ENCODE measurements at regions of chr19 and their contacts with region 1.

Region 1: GRCh38 chr19:49817964-49818648 is at the start of gene MED25:
- DNase-seq: peak; percentile 97
- H3K4me3 ChIP-seq: peak within 1 kb of the TSS; percentile 62 to 93 (median 79)
- H3K27ac ChIP-seq: peak within 1 kb of the TSS; percentile 94 to 97 (median 96)
- H3K4me1 ChIP-seq: peaks cover 34 to 38% (median 36%) of the 10 kb centered on the region in 4 donors
- H3K27me3 ChIP-seq: no peaks in the 10 kb centered on the region
- CTCF ChIP-seq: peak; percentile 23 to 51 (median 50)
- EP300 ChIP-seq: no peak
- POLR2A ChIP-seq: peak; percentile 55
- total RNA-seq, gene MED25: 22.5 to 36.0 (median 34.1) TPM

Region 2: DNA sequence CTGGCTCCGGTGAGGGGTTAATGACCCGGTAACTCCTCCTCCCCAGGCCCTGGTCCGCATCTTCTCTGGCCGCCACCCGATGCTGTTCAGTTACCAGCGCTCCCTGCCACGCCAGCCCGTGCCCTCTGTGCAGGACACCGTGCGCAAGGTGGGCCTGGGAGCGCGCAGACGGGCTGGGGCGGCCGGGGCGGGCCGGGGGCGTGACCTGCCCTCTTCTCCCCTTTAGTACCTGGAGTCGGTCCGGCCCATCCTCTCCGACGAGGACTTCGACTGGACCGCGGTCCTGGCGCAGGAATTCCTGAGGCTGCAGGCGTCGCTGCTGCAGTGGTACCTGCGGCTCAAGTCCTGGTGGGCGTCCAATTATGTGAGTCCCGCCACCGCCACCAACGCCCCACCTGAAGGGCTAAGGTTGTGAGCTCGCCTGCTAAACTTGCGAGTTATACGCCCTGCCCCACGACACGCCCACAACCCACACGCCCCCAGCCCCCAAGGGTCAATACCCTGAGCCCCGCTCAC is 116.8 kb before region 1 on chr19:
- intact Hi-C with region 1: no loop called
- DNase-seq: no peak
- H3K4me3 ChIP-seq: no peak overlapping the region
- H3K27ac ChIP-seq: no peak overlapping the region
- H3K4me1 ChIP-seq: no peaks in the 10 kb centered on the region
- H3K27me3 ChIP-seq: peaks cover 0 to 6% (median 0%) of the 10 kb centered on the region in 4 donors
- CTCF ChIP-seq: no peak
- EP300 ChIP-seq: no peak
- POLR2A ChIP-seq: no peak

Region 3: GRCh38 chr19:49712397-49712859 is 105.7 kb before region 1 on chr19:
- intact Hi-C with region 1: no loop called
- DNase-seq: no peak
- H3K4me3 ChIP-seq: no peak overlapping the region
- H3K27ac ChIP-seq: no peak overlapping the region
- H3K4me1 ChIP-seq: peaks cover 0 to 3% (median 0%) of the 10 kb centered on the region in 4 donors
- H3K27me3 ChIP-seq: no peaks in the 10 kb centered on the region
- CTCF ChIP-seq: no peak
- EP300 ChIP-seq: no peak
- POLR2A ChIP-seq: no peak

Region 4: DNA sequence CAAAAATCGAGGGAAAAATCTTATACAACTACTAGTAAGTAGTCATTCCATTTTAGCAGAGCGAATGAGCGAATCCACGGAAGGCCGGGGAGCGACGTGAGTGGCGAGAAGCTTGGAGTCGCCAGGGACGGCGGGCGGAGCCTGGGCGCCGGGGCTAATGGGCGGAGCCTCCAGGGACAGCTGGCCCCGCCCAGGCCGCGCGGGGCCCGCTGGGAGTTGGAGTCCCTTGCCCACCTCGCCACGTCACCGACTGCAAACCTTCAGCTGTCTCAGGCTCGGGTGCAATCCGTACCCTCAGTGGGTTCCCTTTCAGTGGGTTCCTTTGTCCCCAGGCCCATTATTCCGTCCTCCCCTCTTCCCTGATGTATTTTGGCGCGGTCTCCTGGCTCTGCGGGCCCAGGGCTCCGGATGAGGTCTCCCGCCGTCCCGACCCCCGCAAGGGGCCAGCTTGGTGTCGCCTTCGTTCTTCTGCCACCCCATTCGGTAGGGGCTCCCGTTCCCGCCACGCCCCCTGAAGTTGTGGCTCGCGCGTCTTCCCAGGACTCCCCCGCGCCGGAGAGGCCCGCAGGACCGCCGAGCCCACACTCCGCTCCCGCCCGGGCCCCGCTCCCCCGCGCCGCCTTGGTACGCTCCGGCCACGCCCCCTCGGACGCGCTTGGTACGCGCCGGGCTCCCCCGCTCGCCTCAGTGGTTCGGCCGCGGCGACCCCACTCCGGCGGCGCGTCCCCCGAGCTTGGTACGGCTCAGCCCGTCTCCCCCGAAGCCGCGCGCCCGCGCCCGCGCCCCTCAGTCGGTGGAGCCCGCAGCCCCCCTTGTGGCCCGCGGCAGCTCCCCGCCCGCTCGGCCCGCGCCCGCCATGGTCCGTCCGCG is 32.6 kb after region 1 on chr19 and contains the start of gene PTOV1:
- intact Hi-C with region 1: loop called (anchors 5 kb)
- DNase-seq: peak; percentile 97
- H3K4me3 ChIP-seq: peak within 1 kb of the TSS; percentile 84 to 97 (median 86)
- H3K27ac ChIP-seq: peak within 1 kb of the TSS; percentile 96 to 100 (median 98)
- H3K4me1 ChIP-seq: peaks cover 27 to 44% (median 40%) of the 10 kb centered on the region in 4 donors
- H3K27me3 ChIP-seq: no peaks in the 10 kb centered on the region
- CTCF ChIP-seq: no peak
- EP300 ChIP-seq: no peak
- POLR2A ChIP-seq: peak; percentile 76
- total RNA-seq, gene PTOV1: 60.5 to 102 (median 84.4) TPM

Region 5: DNA sequence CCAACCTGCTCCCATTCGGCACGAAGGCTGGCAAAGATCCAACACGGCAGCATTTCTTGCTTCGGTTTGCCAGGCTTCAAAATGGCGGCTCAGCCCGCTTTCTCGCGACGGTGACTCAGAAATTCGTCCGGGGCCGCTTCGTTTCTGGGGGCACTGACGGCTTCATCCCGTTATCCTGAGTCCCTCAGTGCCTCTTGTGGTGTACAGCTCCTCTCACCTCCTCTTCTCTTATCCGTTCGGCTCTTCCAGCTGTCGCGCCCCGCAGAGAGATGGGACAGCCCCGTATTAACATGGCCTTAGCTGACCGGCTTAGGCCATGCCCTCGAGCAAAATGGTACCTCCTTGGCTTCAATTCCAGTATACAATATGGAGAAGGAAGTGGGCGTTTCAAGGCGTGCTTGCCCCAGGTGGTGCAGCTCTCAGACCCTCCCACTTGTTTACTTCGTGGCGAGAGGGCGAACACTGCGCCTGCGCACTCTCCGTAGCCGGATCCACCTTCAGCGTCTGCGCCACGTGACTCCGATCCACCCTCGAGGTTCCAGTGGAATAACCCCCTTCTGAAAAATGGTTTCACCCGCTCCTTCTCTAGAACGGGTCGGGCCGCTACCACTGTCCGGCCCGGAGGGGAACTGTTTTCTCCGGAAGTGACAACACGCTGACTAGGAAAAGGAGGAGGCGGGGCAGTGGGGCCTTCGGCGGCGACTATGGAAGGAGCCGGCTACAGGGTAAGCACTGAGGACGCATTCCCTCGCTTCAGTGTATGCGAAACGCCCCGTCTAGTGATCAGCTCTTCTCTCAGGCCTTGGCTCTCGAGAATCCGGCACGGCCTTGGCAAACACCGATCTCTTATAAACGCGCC is 59.1 kb after region 1 on chr19 and contains the starts of genes AKT1S1 and TBC1D17:
- intact Hi-C with region 1: loop called (anchors 5 kb)
- DNase-seq: peak; percentile 100
- H3K4me3 ChIP-seq: peak within 1 kb of the TSS; percentile 83 to 99 (median 98)
- H3K27ac ChIP-seq: peak within 1 kb of the TSS; percentile 97 to 100 (median 99)
- H3K4me1 ChIP-seq: peaks cover 27 to 54% (median 42%) of the 10 kb centered on the region in 4 donors
- H3K27me3 ChIP-seq: no peaks in the 10 kb centered on the region
- CTCF ChIP-seq: no peak
- EP300 ChIP-seq: no peak
- POLR2A ChIP-seq: peak; percentile 94
- total RNA-seq, gene AKT1S1: 15.4 to 30.6 (median 21.9) TPM
- total RNA-seq, gene TBC1D17: 35.1 to 60.9 (median 44.0) TPM

Measured in esophagus muscularis mucosa (tissue), 4 donors.